AG04450 (cell line): ENCODE measurements at regions of chr10 and their contacts with region 1.

Region 1: DNA sequence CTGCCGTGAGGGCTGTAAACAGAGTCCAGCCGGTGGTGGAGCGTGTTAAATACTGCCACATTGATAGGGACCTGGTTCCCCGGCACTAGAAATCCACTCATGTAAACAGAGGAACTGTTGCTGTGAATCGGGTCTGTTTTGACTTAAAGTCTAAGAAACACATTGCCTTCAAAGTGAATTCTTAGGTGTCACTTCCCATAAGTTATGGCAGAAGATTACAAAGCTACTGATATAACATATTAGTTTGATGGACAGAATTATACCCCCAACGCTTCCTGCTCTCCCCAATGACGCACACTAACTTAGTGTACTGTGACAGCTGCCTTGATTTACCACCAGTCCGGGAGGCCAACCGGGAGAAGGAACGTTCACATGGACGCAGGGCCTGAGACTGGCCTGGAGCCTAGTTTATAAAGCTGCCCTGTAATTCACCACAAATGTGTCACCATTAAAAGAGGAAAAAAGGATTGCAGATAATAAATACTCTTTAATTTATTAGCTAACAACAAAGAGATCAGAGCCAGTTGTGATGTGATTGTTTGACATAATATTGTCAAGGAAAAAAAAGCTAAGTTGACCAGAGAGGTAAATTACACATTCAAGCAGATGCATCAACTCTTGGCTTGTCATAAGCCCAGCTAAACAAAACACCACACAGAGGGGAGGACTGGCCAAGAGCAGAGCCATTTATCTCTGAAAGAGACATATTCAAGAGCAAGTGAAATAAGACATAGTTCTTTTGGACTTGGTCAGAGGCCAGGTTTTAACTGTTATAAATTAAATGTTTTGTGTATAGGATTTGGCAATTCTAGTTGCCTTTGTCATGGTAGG is 820.6 kb downstream of the LRMDA start:
- DNase-seq: peak; percentile 97
- H3K4me3 ChIP-seq: no peak overlapping the region
- H3K27ac ChIP-seq: peak overlapping the region; percentile 59
- H3K27me3 ChIP-seq: no peaks in the 10 kb centered on the region
- CTCF ChIP-seq: no peak

Region 2: GRCh38 chr10:75401569-75402485 is 850.2 kb before region 1 on chr10 and contains the start of gene ZNF503:
- CTCF ChIA-PET with region 1: no interaction called
- POLR2A ChIA-PET with region 1: interaction called, 24 read pairs
- DNase-seq: peak; percentile 95
- H3K4me3 ChIP-seq: peak within 1 kb of the TSS; percentile 100
- H3K27ac ChIP-seq: peak within 1 kb of the TSS; percentile 93
- H3K27me3 ChIP-seq: peaks cover 38% of the 10 kb centered on the region
- CTCF ChIP-seq: no peak; the same call in 1 of the 2 replicates
- polyA plus RNA-seq, gene ZNF503: 2.5 and 3.3 TPM in 2 replicates

Region 3: GRCh38 chr10:76190634-76191270 is 61.3 kb before region 1 on chr10:
- CTCF ChIA-PET with region 1: interaction called, 3 read pairs
- POLR2A ChIA-PET with region 1: interaction called, 19 read pairs
- DNase-seq: no peak
- H3K4me3 ChIP-seq: no peak overlapping the region
- H3K27ac ChIP-seq: no peak overlapping the region
- H3K27me3 ChIP-seq: no peaks in the 10 kb centered on the region
- CTCF ChIP-seq: no peak

Region 4: DNA sequence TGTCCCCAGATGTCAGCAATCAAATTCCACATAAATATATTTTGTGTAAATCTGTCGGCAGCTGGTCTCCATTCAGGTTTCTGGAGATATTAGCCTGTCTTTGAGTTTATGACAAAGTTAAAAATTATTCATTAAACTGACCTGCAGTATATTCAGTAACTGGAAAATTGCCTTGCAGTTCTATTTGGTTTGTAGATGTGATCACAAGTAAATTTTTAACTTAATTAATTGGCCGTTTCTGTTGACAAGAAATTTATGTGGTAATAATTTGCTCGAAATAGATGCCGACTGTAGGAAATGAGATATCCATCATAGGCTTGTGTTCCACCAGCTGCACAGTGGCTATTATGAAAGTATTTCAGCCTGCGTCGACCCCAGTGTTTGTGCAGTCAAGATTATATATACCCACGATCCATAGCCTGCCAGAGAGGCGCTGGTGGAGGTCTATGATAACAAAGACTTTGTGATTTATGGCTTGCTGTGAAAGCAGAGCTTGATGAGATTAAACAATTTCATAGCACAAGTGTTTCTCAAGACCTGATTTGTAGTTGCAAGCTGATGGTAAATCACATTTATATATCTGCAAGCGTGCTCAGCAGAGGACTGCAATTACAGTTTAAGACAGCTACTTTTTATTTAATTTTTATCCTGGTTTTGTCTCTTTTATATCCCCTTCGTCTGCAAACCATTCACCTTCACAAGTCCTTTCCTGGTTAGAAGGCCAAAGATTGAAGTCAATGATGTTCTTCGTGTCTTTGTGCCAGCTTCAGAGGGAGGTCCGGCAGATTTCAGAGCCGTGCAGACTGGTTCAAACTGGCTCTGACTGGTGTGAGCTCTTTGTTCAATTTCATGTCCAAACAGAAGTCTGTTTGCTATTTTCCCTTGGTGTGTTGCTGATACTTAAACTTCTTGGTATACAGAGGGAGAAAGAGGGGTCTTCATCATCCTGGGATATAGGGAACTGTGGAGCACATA is 30.3 kb after region 1 on chr10:
- CTCF ChIA-PET with region 1: interaction called, 3 read pairs
- POLR2A ChIA-PET with region 1: interaction called, 28 read pairs
- DNase-seq: peak; percentile 65
- H3K4me3 ChIP-seq: no peak overlapping the region
- H3K27ac ChIP-seq: no peak overlapping the region
- H3K27me3 ChIP-seq: no peaks in the 10 kb centered on the region
- CTCF ChIP-seq: no peak

Region 5: DNA sequence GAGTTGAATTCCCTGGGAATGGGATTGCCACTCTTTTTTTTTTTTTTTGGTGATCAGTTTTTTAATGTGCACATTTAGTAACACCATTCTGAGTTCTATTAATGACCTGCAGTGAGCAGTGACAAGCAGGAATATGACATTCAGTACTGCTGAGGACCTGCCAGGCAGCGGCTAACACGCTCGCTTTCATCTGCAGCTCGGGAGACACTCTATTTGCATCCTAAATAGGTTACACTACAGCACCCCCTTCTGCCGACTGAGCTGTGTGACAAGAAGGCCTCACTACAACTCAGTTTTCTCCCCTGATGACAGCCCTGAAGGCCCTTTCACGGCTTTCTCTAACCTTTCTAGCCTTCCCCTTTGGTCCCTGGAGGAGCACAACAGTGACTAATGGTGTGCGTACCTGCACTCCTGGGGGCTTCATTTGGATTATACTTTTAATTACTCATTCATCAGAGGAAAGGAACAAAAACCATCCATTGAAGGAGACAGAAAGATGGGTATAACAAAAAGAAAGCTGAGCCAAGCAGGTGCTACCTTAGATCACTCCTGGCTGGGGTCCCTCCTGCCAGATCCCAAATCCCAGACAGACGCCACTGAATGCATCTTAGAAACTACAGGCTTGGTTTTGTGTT is 51.7 kb after region 1 on chr10:
- CTCF ChIA-PET with region 1: no interaction called
- POLR2A ChIA-PET with region 1: interaction called, 11 read pairs
- DNase-seq: peak; percentile 21
- H3K4me3 ChIP-seq: no peak overlapping the region
- H3K27ac ChIP-seq: no peak overlapping the region
- H3K27me3 ChIP-seq: no peaks in the 10 kb centered on the region
- CTCF ChIP-seq: peak; percentile 62

Region 6: DNA sequence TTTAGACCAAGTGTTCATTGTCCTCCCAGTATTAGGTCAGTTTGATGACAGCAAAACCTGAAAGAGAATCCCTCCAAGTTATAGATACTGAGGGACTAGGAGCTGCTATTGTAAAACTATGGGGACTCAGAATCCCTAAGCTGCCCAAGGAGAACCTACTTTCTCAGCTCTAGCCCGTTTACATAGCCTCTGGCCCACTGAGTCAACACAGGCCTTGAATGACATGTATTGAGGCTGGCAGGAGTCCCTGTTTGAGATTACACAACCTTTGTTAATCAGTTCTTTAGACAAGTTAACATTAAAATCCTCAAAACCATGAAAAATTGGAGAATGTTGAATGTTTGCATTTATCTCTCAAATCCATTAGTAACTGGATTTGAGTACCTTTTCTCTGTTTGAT is 306.5 kb after region 1 on chr10:
- CTCF ChIA-PET with region 1: interaction called, 3 read pairs
- POLR2A ChIA-PET with region 1: interaction called, 26 read pairs
- DNase-seq: no peak
- H3K4me3 ChIP-seq: no peak overlapping the region
- H3K27ac ChIP-seq: no peak overlapping the region
- H3K27me3 ChIP-seq: no peaks in the 10 kb centered on the region
- CTCF ChIP-seq: no peak